Activated CD8-positive, alpha-beta memory T cell treated with anti-CD3 and anti-CD28 coated beads, Interleukin-2, amount 10 ng/mL, durations not matched to agents 7 days and 5 days (primary cell): ENCODE measurements at regions of chr1 and their contacts with region 1.

Region 1: GRCh38 chr1:9823943-9824701 is at the start of gene CLSTN1:
- DNase-seq: peak; percentile 95
- ATAC-seq: peak; percentile 86
- H3K4me3 Mint-ChIP-seq: peak within 1 kb of the TSS; percentile 95
- H3K27ac Mint-ChIP-seq: peak within 1 kb of the TSS; percentile 83
- H3K4me1 Mint-ChIP-seq: peaks cover 50% of the 10 kb centered on the region
- H3K27me3 Mint-ChIP-seq: peaks cover 4% of the 10 kb centered on the region
- total RNA-seq, gene CLSTN1: 81.5 to 99.3 TPM

Region 2: DNA sequence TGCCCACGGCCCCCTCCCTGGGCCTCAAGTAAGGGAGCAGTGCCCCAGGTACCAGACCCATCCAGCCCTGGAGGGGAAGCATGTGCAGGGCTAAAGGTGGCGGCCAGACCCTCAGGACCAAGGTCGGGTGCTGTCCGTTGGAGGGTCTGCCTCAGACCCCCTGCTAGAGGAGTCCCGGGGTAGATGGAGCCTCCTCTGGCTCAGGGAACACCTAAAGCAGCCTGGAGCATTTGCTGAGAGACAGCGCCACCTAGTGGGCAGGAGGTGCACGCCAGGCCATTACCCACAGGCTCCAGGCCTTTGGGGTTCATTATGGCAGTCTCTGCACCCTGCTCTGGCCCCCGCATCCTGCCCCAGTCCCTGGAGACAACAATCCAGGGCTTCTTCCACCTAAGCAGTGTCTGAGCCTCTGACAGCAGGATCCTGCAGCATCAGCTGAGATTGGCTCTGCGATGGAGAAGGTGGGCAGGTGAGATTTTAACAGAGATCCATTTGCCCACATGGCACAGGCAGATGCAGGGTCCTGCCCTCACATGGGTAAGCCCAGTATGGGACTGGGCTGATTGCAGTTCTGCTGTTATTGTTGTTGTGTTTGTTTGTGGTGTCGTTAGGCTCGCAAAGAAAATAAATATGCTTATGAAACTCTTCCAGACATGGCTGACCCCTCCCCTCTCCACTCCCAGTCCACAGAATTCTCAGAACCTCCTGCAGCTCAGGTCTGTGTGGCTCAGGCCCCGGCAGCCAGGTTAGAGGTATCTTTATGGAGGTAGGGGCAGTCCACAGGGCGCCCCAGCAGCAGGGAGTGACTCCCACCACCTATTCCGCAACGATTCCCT is 43.5 kb after region 1 on chr1:
- CTCF ChIA-PET with region 1: interaction called, 10 read pairs
- DNase-seq: peak; percentile 92
- ATAC-seq: peak; percentile 98
- H3K4me3 Mint-ChIP-seq: no peak overlapping the region
- H3K27ac Mint-ChIP-seq: peak overlapping the region; percentile 7
- H3K4me1 Mint-ChIP-seq: peaks cover 2% of the 10 kb centered on the region
- H3K27me3 Mint-ChIP-seq: no peaks in the 10 kb centered on the region